ENCODE measurements at regions of chrX and their contacts with region 1.

Region 1: DNA sequence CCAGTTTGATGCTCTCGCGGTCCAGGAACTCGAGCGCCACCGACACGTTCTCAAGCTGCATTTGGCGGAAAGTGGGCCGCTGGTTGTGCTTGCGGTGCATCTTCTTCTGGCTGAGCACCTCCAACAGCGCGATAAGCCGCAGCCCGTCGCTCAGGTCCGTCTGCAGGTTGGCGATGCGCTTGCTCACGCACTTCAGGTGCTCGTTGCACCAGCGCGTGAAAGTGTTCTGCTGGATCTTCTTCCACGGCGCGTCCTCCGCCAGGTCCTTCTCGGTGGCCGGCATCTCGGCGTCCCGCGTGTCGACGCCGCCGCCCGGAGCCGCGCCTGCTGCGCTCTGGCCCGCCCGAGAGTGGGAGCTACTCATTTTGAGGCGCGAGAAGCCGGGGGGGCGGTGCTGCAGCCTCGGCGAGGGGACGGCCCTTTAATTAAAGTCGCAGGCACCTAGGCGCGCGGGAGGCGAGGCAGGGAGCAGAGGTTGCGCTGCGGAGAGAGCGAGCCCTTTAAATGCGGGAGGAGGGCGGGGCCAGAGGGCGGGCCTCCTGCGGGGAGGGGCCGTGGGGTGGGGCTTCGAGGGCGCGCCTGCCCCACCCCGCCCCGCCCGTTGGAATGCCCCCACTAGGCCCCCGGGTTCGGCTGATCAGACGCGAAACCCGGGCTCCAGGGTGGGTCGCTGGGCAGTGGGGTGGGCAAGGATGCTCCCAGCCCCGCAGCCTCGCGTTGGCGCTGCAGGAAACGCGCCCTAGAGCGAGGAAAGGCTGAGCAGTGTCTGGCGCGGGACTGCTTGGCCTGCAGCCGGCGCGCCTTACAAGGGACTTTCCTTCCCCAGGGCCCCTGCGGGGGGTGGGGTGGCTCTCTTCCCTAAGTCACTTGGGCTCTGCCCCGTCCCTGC is 3.3 kb downstream of the FLNA start:
- DNase-seq: peak; percentile 73 to 91 (median 89)
- ATAC-seq: peak; percentile 77
- H3K4me3 ChIP-seq: peak overlapping the region; percentile 82
- H3K4me3 Mint-ChIP-seq: peak overlapping the region; percentile 77 to 89 (median 83)
- H3K27ac ChIP-seq: peak overlapping the region; percentile 91
- H3K27ac Mint-ChIP-seq: peak overlapping the region in 7 of 9 donors; percentile 25 to 77 (median 62)
- H3K4me1 ChIP-seq: peaks cover 29 to 37% of the 10 kb centered on the region in 2 donors
- H3K4me1 Mint-ChIP-seq: peaks cover 0 to 25% (median 17%) of the 10 kb centered on the region in 7 donors
- H3K27me3 ChIP-seq: no peaks in the 10 kb centered on the region
- H3K27me3 Mint-ChIP-seq: no peaks in the 10 kb centered on the region

Region 2: GRCh38 chrX:154327038-154327820 is 43.9 kb before region 1 on chrX:
- CTCF ChIA-PET with region 1: interaction called, 4 read pairs
- POLR2A ChIA-PET with region 1: interaction called, 22 read pairs
- intact Hi-C with region 1: loop called in 1 of 2 experiments (anchors 2 kb)
- DNase-seq: peak in 7 of 9 donors; percentile 54 to 71 (median 64)
- ATAC-seq: peak; percentile 94
- H3K4me3 ChIP-seq: peak overlapping the region; percentile 42
- H3K4me3 Mint-ChIP-seq: peak overlapping the region; percentile 61 to 85 (median 79)
- H3K27ac ChIP-seq: peak overlapping the region; percentile 62
- H3K27ac Mint-ChIP-seq: peak overlapping the region; percentile 71 to 93 (median 90)
- H3K4me1 ChIP-seq: peaks cover 26 to 42% of the 10 kb centered on the region in 2 donors
- H3K4me1 Mint-ChIP-seq: peaks cover 16 to 63% (median 50%) of the 10 kb centered on the region in 7 donors
- H3K27me3 ChIP-seq: no peaks in the 10 kb centered on the region
- H3K27me3 Mint-ChIP-seq: no peaks in the 10 kb centered on the region

Region 3: DNA sequence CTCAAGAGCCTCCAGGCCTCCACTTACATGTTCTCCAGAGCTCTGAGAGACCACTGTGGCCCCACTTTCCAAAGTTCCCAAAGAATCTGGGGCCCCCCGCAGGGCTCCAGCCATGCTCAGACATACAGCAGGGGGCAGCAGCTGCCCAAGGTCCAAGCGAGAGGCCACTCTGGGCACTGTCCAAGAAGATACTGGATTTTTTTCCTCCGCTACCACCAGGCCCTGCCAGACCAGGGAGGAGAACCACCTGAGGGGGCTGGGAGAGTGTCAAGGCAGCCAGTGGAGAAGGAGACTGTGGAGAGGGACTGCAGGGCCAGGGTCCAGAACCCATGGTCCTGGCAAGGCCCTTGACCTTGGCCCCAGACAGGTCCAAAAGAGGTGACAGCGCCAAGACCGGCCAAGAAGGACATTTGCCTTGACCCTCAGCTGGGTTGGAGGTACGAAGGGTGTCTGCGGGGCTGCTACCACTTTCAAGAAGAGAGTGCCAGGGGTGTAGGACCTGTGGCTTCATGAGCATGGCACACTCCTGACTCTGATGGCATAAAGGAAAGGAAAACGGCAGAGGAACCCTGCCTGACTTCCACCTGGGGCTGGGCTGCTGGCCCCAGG is 13.3 kb after region 1 on chrX:
- CTCF ChIA-PET with region 1: interaction called, 5 read pairs
- POLR2A ChIA-PET with region 1: interaction called, 10 read pairs
- intact Hi-C with region 1: loop called in 1 of 2 experiments (anchors 1 kb)
- DNase-seq: no peak
- ATAC-seq: no peak
- H3K4me3 ChIP-seq: no peak overlapping the region
- H3K4me3 Mint-ChIP-seq: no peak overlapping the region
- H3K27ac ChIP-seq: no peak overlapping the region
- H3K27ac Mint-ChIP-seq: peak overlapping the region in 3 of 9 donors; percentile 19 to 46 (median 41)
- H3K4me1 ChIP-seq: peaks cover 10% of the 10 kb centered on the region in 2 donors
- H3K4me1 Mint-ChIP-seq: peaks cover 3 to 14% (median 12%) of the 10 kb centered on the region in 7 donors
- H3K27me3 ChIP-seq: no peaks in the 10 kb centered on the region
- H3K27me3 Mint-ChIP-seq: no peaks in the 10 kb centered on the region

Region 4: DNA sequence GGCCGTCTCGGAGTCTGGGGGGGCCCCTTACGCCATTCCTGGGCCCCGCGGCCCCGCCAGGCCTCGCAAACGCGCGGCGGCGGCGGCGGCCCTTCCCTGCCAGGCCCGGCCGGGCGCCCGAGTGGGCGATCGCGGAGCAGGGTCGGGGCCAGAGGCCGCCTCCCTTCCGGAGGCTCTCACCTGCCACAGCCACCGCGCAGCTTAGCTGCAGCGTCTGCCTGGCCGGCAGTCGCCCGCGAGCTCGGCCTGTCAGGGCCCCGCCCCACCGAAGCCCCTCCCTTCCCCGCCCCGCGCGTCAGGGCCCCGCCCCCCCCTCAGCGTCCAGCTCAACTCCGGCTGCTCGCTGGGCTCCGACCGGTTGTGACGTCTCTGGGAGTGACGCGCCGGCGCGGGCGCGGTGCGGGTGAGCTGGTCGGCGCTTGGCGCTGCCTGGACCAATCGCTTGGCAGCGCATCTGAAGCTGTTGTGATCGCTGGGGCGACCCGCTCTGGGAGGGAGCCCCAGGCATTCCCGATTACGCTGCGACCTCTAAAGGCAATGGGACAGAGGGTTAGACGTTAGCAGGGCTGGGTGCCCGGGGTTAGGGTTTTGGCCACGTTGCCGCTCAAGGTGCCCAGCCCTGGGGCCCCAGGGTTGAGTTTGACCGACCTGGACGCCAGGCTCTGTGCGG is 119.4 kb after region 1 on chrX and contains the start of gene SLC10A3:
- CTCF ChIA-PET with region 1: no interaction called
- POLR2A ChIA-PET with region 1: no interaction called
- intact Hi-C with region 1: loop called in 1 of 2 experiments (anchors 1 kb)
- DNase-seq: peak; percentile 70 to 87 (median 77)
- ATAC-seq: peak; percentile 93
- H3K4me3 ChIP-seq: peak within 1 kb of the TSS; percentile 74
- H3K4me3 Mint-ChIP-seq: peak within 1 kb of the TSS; percentile 78 to 92 (median 88)
- H3K27ac ChIP-seq: peak within 1 kb of the TSS; percentile 90
- H3K27ac Mint-ChIP-seq: peak within 1 kb of the TSS; percentile 81 to 96 (median 91)
- H3K4me1 ChIP-seq: peaks cover 0 to under 1% of the 10 kb centered on the region in 2 donors
- H3K4me1 Mint-ChIP-seq: peaks cover 0 to 23% (median 17%) of the 10 kb centered on the region in 7 donors
- H3K27me3 ChIP-seq: no peaks in the 10 kb centered on the region
- H3K27me3 Mint-ChIP-seq: no peaks in the 10 kb centered on the region
- total RNA-seq, gene SLC10A3: 11.7 to 22.7 (median 19.0) TPM

Measured in naive thymus-derived CD4-positive, alpha-beta T cell (primary cell).